ENCODE measurements at regions of chr1 and their contacts with region 1.

Region 1: GRCh38 chr1:193589597-193590040 is 403.2 kb upstream of the B3GALT2 start:
- DNase-seq: no peak
- ATAC-seq: no peak
- H3K4me3 ChIP-seq: no peak overlapping the region
- H3K4me3 Mint-ChIP-seq: no peak overlapping the region
- H3K27ac ChIP-seq: no peak overlapping the region
- H3K27ac Mint-ChIP-seq: peak overlapping the region in 1 of 2 donors; percentile 51
- H3K4me1 ChIP-seq: no peaks in the 10 kb centered on the region
- H3K4me1 Mint-ChIP-seq: peaks cover 22 to 31% of the 10 kb centered on the region in 2 donors
- H3K27me3 ChIP-seq: no peaks in the 10 kb centered on the region
- H3K27me3 Mint-ChIP-seq: no peaks in the 10 kb centered on the region
- CTCF ChIP-seq: no peak

Region 2: GRCh38 chr1:193479187-193479586 is 110.4 kb before region 1 on chr1:
- intact Hi-C with region 1: loop called (anchors 10 kb)
- DNase-seq: peak; percentile 44 to 92
- ATAC-seq: peak; percentile 86 to 95 (median 86)
- H3K4me3 ChIP-seq: no peak overlapping the region
- H3K4me3 Mint-ChIP-seq: peak overlapping the region; percentile 68
- H3K27ac ChIP-seq: peak overlapping the region; percentile 49
- H3K27ac Mint-ChIP-seq: peak overlapping the region; percentile 88
- H3K4me1 ChIP-seq: peaks cover 4% of the 10 kb centered on the region
- H3K4me1 Mint-ChIP-seq: peaks cover 40 to 50% of the 10 kb centered on the region in 2 donors
- H3K27me3 ChIP-seq: no peaks in the 10 kb centered on the region
- H3K27me3 Mint-ChIP-seq: no peaks in the 10 kb centered on the region
- CTCF ChIP-seq: no peak

Region 3: DNA sequence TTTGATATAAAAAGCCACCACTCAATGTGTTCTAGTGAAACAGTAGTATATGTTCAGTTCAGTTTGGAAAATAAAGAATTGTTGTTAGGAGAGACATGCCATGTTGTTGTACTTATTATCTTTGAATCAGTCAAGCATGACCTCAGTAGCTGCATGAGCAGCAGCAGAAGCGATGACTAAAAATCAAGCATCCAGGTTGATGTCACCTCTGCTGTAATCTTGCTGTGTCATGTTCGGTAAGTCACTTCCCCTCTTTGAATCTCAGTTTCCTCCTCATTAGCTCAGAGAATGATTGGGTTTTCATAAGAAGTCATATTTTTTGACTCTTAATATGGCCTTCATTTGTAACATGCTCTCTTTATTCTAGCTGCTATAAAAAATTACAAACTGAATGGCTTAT is 25.2 kb after region 1 on chr1:
- intact Hi-C with region 1: no loop called
- DNase-seq: no peak
- ATAC-seq: no peak
- H3K4me3 ChIP-seq: no peak overlapping the region
- H3K4me3 Mint-ChIP-seq: no peak overlapping the region
- H3K27ac ChIP-seq: no peak overlapping the region
- H3K27ac Mint-ChIP-seq: no peak overlapping the region
- H3K4me1 ChIP-seq: no peaks in the 10 kb centered on the region
- H3K4me1 Mint-ChIP-seq: no peaks in the 10 kb centered on the region
- H3K27me3 ChIP-seq: no peaks in the 10 kb centered on the region
- H3K27me3 Mint-ChIP-seq: no peaks in the 10 kb centered on the region
- CTCF ChIP-seq: no peak